Common myeloid progenitor, CD34-positive (primary cell): ENCODE measurements at regions of chr11 and their contacts with region 1.

Region 1: DNA sequence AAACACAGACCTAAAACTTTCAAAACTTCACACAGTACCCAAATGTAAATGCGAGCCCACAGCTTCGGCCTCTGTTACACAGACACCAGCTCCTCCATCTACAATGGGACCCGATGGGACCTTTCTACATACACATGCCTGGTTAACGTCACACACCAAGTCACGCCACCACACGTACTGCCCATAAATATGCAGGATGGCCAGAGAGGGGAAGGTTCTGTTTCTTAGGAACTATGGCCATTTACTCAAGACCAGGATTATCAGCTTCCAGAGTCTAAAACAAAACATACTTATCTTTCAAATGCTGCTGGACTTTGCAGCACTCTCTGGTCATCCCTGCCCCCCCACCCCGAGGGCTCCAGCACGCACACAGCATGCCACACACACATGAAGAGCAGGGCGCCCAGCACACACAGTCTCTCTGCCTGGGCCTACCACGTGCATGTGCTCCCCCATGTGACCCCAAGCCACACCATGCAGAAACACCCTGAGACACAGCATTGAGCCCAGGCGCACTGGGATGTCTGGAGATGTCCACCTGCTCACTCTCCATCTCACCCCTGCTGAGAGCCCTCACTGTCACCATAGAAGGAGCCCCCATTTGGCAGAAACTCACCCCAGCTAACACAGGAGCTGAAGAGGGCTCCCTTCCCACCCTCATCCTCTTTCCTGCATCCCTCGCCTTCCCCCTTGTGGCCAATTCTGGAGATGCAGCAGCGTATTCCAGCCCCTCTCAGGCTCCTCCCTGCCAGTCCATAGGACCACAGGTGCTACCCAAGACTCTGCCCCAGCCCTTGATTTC is 61.8 kb downstream of the SLC22A12 start:
- DNase-seq: peak; percentile 71 to 77 (median 76)
- H3K4me3 ChIP-seq: no peak overlapping the region
- H3K27ac ChIP-seq: no peak overlapping the region
- H3K4me1 ChIP-seq: peaks cover 0 to 55% (median 45%) of the 10 kb centered on the region in 4 experiments
- H3K27me3 ChIP-seq: no peaks in the 10 kb centered on the region

Region 2: GRCh38 chr11:64448599-64449556 is 203.9 kb before region 1 on chr11:
- CTCF ChIA-PET with region 1: interaction called, 58 read pairs
- POLR2A ChIA-PET with region 1: no interaction called
- DNase-seq: peak; percentile 50 to 71 (median 68)
- H3K4me3 ChIP-seq: peak overlapping the region in 6 of 7 experiments; percentile 55 to 85 (median 66)
- H3K27ac ChIP-seq: no peak overlapping the region
- H3K4me1 ChIP-seq: peaks cover 7 to 25% (median 24%) of the 10 kb centered on the region in 4 experiments
- H3K27me3 ChIP-seq: no peaks in the 10 kb centered on the region

Region 3: GRCh38 chr11:64558111-64558916 is 94.5 kb before region 1 on chr11:
- CTCF ChIA-PET with region 1: no interaction called
- POLR2A ChIA-PET with region 1: no interaction called
- DNase-seq: no peak
- H3K4me3 ChIP-seq: no peak overlapping the region
- H3K27ac ChIP-seq: no peak overlapping the region
- H3K4me1 ChIP-seq: peaks cover 0 to 24% (median 21%) of the 10 kb centered on the region in 4 experiments
- H3K27me3 ChIP-seq: no peaks in the 10 kb centered on the region

Region 4: DNA sequence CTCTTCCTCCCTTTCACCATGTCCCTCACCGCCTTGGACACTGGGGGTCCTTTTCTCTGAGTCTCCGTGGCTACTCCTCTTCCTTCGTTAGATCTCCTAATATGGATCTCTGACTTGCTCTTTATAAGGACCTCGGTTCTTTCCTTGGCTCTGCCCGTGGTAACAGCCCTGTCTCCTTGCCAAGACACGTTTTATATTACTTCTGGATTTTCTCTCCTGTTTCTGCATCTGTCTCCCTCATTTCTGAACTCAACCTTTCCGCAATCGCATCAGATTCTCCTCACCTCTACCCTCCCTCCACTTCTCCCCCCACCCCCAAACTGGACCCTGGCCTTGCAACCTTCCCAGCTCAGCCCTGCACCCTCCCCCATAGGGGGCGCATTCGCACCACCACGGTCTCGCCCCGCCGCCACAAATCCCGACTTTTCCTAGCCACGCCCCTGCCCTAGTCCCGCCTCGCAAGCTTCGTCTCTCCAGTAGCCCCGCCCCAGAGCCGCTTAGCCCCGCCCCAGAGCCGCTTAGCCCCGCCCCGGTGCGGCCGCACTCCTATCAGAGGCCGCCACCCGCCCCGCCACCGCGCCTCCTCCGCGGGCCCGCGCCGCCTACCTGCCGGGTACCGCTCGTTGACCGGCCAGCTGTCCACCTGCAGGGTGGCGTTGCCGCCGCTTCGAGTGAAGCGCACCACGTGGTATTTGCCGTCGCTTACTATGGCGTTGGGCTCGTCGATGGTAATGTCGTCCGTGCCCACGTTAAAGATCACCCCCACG is 22.8 kb before region 1 on chr11:
- CTCF ChIA-PET with region 1: interaction called, 68 read pairs
- POLR2A ChIA-PET with region 1: interaction called, 6 read pairs
- DNase-seq: no peak
- H3K4me3 ChIP-seq: no peak overlapping the region
- H3K27ac ChIP-seq: no peak overlapping the region
- H3K4me1 ChIP-seq: peaks cover 4 to 46% (median 28%) of the 10 kb centered on the region in 4 experiments
- H3K27me3 ChIP-seq: no peaks in the 10 kb centered on the region

Region 5: GRCh38 chr11:64675450-64676260 is 22.9 kb after region 1 on chr11:
- CTCF ChIA-PET with region 1: interaction called, 10 read pairs
- POLR2A ChIA-PET with region 1: no interaction called
- DNase-seq: peak in 2 of 3 donors; percentile 58 to 66
- H3K4me3 ChIP-seq: no peak overlapping the region
- H3K27ac ChIP-seq: no peak overlapping the region
- H3K4me1 ChIP-seq: peaks cover 0 to 27% (median 16%) of the 10 kb centered on the region in 4 experiments
- H3K27me3 ChIP-seq: peaks cover 0 to 4% (median 0%) of the 10 kb centered on the region in 5 experiments

Region 6: DNA sequence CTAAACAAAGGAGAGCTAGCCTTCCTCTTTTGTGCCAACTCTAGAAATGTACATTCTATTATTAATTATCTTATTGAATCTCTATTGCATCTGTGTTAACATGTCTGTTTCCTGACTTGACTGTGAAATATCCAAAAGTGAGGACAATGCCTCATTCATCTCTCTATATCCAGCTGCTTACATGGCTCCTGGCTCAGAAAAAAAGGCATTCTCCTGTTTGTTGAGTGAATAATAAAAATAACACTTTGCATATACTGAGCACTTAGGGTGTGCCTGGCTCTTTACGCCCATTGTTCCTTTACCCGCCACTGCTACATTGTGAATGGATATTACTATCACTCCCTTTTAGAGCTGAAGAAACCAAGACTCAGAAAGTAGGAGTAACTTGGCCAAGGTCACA is 50.3 kb after region 1 on chr11:
- CTCF ChIA-PET with region 1: interaction called, 13 read pairs
- POLR2A ChIA-PET with region 1: no interaction called
- DNase-seq: no peak
- H3K4me3 ChIP-seq: no peak overlapping the region
- H3K27ac ChIP-seq: no peak overlapping the region
- H3K4me1 ChIP-seq: no peaks in the 10 kb centered on the region
- H3K27me3 ChIP-seq: peaks cover 0 to 6% (median 0%) of the 10 kb centered on the region in 5 experiments

Region 7: GRCh38 chr11:64810271-64810890 is 157.6 kb after region 1 on chr11 and contains the start of gene MEN1:
- CTCF ChIA-PET with region 1: no interaction called
- POLR2A ChIA-PET with region 1: no interaction called
- DNase-seq: peak; percentile 89 to 94 (median 94)
- H3K4me3 ChIP-seq: peak within 1 kb of the TSS; percentile 71 to 91 (median 83)
- H3K27ac ChIP-seq: peak within 1 kb of the TSS; percentile 25 to 64
- H3K4me1 ChIP-seq: peaks cover 4 to 15% (median 11%) of the 10 kb centered on the region in 4 experiments
- H3K27me3 ChIP-seq: no peaks in the 10 kb centered on the region